IMR-90 (cell line): ENCODE measurements at regions of chr16 and their contacts with region 1.

Region 1: GRCh38 chr16:58020628-58021139 is 4.9 kb upstream of the MMP15 start:
- DNase-seq: peak; percentile 43
- ATAC-seq: peak; percentile 51; the same call in 1 of the 2 replicates
- H3K4me3 ChIP-seq: no peak overlapping the region
- H3K27ac ChIP-seq: no peak overlapping the region
- H3K4me1 ChIP-seq: peaks cover 14% of the 10 kb centered on the region
- H3K27me3 ChIP-seq: peaks cover 9% of the 10 kb centered on the region
- CTCF ChIP-seq: peak; percentile 82
- POLR2A ChIP-seq: no peak
- RAD21 ChIP-seq: peak; percentile 85

Region 2: DNA sequence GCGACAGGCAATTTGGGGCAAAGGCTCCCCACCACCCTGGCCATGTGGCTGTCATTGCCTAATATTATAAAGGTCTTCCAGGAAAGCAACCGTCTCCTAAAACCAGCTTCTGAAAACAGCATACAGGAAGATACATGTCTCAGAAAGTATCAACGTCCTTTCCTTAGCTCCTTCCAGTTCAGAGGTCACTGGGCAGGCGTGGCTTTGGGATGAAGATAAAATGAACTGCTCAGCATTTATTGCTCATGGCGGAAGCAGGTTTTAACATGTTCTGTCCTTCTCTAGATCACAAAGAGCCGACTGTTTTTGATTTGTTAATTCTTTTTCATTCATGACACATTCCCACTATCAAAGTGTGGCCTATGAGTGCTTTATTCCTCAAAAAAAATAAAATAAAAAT is 100.4 kb after region 1 on chr16:
- CTCF ChIA-PET with region 1: interaction called, 17 read pairs
- POLR2A ChIA-PET with region 1: interaction called, 3 read pairs
- dilution Hi-C with region 1: no loop called
- in situ Hi-C with region 1: loop called (anchors 5 kb)
- intact Hi-C with region 1: loop called (anchors 1 kb)
- DNase-seq: no peak
- ATAC-seq: no peak
- H3K4me3 ChIP-seq: no peak overlapping the region
- H3K27ac ChIP-seq: no peak overlapping the region
- H3K4me1 ChIP-seq: peaks cover 26% of the 10 kb centered on the region
- H3K27me3 ChIP-seq: no peaks in the 10 kb centered on the region
- CTCF ChIP-seq: no peak
- POLR2A ChIP-seq: no peak
- RAD21 ChIP-seq: no peak

Region 3: DNA sequence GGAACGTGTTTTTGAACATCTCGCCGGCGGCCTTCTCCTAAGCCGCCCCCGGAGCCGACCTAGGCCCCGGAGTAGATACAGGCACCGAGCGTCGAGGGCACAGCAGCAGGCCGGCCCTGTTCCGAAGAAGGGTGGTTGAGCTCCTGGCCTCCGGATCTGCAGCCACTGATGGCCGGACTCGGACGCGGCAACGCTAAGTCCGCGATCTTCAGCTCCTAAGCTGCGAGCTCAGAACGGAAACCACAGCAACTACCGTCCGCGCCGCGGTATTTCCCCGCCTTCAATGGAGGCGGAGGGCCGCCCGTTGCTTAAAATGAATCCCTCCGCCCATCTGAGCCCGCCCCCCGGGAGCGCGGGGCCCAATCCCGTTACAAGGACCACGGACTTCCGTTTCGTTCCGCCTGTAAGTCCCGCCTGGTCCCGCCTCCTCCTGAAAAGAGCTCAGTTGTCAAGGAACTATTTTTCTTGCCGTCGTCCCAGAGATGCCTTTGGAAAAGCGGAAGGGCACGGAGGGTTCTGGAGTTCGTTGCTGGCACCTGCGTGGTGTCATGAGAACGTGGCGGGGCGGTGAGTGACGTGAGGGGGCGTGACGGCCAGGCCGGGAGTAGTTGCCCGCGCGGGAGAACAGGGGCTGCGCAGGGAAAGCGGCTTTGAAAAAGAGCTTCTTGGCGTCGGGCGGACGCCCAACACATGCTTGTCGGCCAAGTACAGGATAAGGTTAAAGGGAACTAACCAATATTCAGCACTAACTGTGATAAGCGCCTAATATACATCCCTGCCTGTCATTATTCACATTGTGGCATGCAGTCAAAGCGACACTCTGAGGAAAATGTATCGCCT is 108.6 kb after region 1 on chr16 and contains the start of gene CFAP20:
- CTCF ChIA-PET with region 1: no interaction called
- POLR2A ChIA-PET with region 1: no interaction called
- dilution Hi-C with region 1: no loop called
- in situ Hi-C with region 1: loop called (anchors 5 kb)
- intact Hi-C with region 1: no loop called
- DNase-seq: peak; percentile 100
- ATAC-seq: peak; percentile 95
- H3K4me3 ChIP-seq: peak within 1 kb of the TSS; percentile 84
- H3K27ac ChIP-seq: peak within 1 kb of the TSS; percentile 72
- H3K4me1 ChIP-seq: peaks cover 11% of the 10 kb centered on the region
- H3K27me3 ChIP-seq: no peaks in the 10 kb centered on the region
- CTCF ChIP-seq: no peak
- POLR2A ChIP-seq: peak; percentile 92
- RAD21 ChIP-seq: no peak
- total RNA-seq, gene CFAP20: 36.4 and 39.1 TPM in 2 replicates

Region 4: GRCh38 chr16:58198022-58198683 is 177.5 kb after region 1 on chr16 and contains the start of gene CSNK2A2:
- CTCF ChIA-PET with region 1: no interaction called
- POLR2A ChIA-PET with region 1: no interaction called
- dilution Hi-C with region 1: no loop called
- in situ Hi-C with region 1: no loop called
- intact Hi-C with region 1: loop called (anchors 1 kb)
- DNase-seq: peak; percentile 56
- ATAC-seq: peak; percentile 99
- H3K4me3 ChIP-seq: peak within 1 kb of the TSS; percentile 82
- H3K27ac ChIP-seq: peak within 1 kb of the TSS; percentile 48
- H3K4me1 ChIP-seq: peaks cover 4% of the 10 kb centered on the region
- H3K27me3 ChIP-seq: peaks cover 15% of the 10 kb centered on the region
- CTCF ChIP-seq: peak; percentile 64
- POLR2A ChIP-seq: 0 out of 2 replicates have a peak, but pooled peaks have one; percentile 23
- RAD21 ChIP-seq: peak; percentile 11; the same call in 1 of the 2 replicates
- total RNA-seq, gene CSNK2A2: 15.6 and 16.9 TPM in 2 replicates

Region 5: DNA sequence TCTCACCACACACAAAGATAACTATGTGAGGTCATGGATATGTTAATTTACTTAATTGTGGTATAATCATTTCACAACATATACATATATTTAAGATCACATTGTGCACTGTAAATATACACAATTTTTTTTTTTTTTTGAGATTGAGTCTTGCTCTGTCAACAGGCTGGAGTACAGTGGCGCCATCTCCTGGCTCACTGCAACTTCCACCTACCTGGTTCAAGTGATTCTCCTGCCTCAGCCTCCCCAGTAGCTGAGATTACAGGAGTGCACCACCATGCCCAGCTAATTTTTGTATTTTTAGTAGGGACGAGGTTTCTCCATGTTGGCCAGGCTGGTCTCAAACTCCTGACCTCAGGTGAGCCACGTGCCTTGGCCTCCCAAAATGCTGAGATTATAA is 285.6 kb after region 1 on chr16:
- CTCF ChIA-PET with region 1: no interaction called
- POLR2A ChIA-PET with region 1: no interaction called
- dilution Hi-C with region 1: no loop called
- in situ Hi-C with region 1: no loop called
- intact Hi-C with region 1: loop called (anchors 5 kb)
- DNase-seq: peak; percentile 24
- ATAC-seq: no peak
- H3K4me3 ChIP-seq: no peak overlapping the region
- H3K27ac ChIP-seq: no peak overlapping the region
- H3K4me1 ChIP-seq: no peaks in the 10 kb centered on the region
- H3K27me3 ChIP-seq: no peaks in the 10 kb centered on the region
- CTCF ChIP-seq: peak; percentile 37
- POLR2A ChIP-seq: no peak
- RAD21 ChIP-seq: peak; percentile 32

Region 6: DNA sequence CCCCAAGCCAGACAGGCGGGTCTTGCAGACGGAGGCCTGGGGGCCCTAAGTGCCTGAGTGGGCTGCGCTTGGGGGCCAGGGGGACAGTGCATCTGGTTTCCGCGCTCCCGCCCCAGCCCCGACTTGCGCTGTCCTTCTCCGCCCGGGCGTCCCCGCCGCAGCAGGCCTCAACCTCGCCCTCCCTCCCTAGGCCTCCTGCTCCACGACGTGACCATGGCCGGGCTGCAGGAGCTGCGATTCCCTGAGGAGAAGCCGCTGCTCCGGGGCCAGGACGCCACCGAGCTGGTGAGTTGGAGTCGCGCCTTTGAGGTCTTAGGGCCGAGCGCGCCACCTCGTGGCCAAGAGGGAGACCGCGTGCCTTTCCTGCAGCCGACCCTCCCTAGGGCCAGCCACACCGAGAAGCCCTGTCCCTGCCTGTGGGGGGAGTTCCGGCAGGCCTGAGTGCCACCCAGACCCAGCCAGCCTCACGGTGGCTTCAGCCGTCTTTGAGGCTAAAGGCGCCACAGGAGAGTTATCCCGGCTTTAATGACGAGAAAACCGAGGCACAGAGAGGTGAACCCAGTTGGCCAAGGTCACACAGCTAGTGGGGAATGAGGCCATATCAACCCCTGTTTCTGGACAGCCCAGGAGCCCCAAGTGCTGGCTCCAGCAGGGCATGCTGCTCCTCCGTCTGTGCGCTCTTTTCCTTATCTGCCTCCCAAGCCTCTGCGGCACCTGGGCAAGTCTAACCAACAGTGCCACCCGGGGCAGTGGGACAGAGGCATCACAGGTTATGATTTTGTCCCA is 467.1 kb after region 1 on chr16:
- CTCF ChIA-PET with region 1: no interaction called
- POLR2A ChIA-PET with region 1: no interaction called
- dilution Hi-C with region 1: no loop called
- in situ Hi-C with region 1: no loop called
- intact Hi-C with region 1: loop called (anchors 2 kb)
- DNase-seq: peak; percentile 67
- ATAC-seq: peak; percentile 99
- H3K4me3 ChIP-seq: no peak overlapping the region
- H3K27ac ChIP-seq: no peak overlapping the region
- H3K4me1 ChIP-seq: no peaks in the 10 kb centered on the region
- H3K27me3 ChIP-seq: peaks cover 10% of the 10 kb centered on the region
- CTCF ChIP-seq: peak; percentile 89
- POLR2A ChIP-seq: no peak
- RAD21 ChIP-seq: peak; percentile 89